ENCODE measurements at regions of chr1 and their contacts with region 1.

Region 1: GRCh38 chr1:17922833-17923232 is 167.7 kb downstream of the ACTL8 start:
- DNase-seq: peak; percentile 9 to 84 (median 62)

Region 2: GRCh38 chr1:18100491-18101063 is 177.7 kb after region 1 on chr1:
- intact Hi-C with region 1: loop called (anchors 5 kb)
- DNase-seq: peak in 40 of 42 donors; percentile 34 to 89 (median 75)

Region 3: DNA sequence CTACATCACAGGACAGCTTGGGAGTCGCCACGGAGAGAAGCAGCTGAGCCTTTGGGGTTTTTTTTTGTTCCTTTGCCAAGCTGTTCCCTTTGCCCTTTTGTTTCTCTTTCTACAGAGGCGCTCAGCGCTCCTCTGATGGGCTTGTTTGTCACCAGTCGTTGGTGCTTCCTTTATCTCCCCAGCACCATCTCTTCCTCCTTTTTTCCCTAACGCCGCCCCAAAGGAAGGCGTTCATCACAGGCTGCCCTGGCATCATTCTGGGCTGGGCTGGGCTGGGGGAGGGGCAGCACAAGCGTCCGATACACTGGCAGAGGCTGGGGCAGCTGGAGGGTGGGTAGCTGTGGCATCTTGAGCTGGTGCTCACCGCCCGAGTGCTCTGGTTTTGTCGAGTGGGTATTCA is 195.2 kb after region 1 on chr1:
- intact Hi-C with region 1: no loop called
- DNase-seq: peak in 41 of 42 donors; percentile 16 to 84 (median 57)

Measured in head of caudate nucleus (tissue), 42 donors.